ENCODE measurements at regions of chr16 and their contacts with region 1.

Region 1: DNA sequence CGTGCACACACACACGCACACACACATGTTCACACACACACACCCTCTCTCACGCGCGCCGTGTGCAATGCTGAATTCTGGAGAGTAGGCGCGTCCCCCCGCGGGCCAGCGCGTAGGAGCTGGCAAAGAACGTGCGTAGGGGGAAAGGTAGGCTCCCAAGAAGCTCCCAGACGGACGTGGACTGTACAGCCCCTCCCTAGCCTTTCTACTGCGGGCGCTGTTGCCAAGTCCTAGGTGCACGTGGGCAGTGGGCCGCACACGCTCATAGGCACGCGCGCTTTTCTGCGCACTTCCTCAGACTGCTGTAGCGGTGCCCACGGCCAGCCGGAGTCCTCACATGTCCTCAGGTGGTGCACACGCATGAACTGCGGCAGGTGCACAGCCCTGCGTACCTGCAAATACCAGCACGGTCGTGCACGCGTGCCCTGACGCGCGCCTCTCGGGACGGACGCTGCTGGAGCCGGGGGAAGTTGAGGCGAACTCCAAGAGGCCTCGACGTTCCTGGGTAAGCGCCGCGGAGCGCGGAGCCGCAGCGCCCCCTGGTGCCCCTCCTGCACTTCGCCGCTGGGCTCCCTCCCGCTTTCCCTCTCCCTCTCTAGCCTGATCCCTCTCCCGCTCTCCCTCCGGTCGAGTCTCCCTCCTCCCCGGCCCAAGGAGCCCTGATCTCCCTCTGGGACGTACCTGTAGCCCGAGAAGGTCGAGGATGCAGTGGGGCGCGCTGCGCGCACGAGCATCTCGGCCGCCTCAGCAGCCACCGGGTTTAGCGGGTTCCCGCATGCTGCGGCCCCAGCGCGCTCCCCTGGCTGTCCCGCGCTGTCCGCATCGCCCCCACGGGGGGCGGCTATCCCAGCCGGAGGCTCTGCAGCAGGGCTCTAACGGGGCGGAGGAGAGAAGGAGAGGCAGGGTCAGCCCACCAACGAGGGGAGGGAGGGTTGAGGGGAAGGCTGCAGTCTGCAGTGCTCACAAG is 749 bp downstream of the GRIN2A start:
- DNase-seq: peak; percentile 93

Region 2: GRCh38 chr16:9647981-9648712 is 533.3 kb before region 1 on chr16:
- intact Hi-C with region 1: loop called (anchors 1 to 2 kb)
- DNase-seq: no peak

Measured in posterior vena cava (tissue), 2 donors.